ENCODE measurements at regions of chr22 and their contacts with region 1.

Region 1: GRCh38 chr22:20783844-20784723 is 10.2 kb downstream of the SERPIND1 start:
- DNase-seq: peak; percentile 80
- CTCF ChIP-seq: peak; percentile 70

Region 2: GRCh38 chr22:20606041-20606783 is 177.9 kb before region 1 on chr22:
- in situ Hi-C with region 1: loop called (anchors 25 kb)
- DNase-seq: peak; percentile 88
- CTCF ChIP-seq: peak; percentile 85

Region 3: GRCh38 chr22:20904008-20904979 is 120.2 kb after region 1 on chr22:
- in situ Hi-C with region 1: no loop called
- DNase-seq: no peak
- CTCF ChIP-seq: no peak